ENCODE measurements at regions of chr13 and their contacts with region 1.

Region 1: GRCh38 chr13:50319635-50320255 is 304.5 kb downstream of the KCNRG start:
- DNase-seq: no peak
- H3K4me3 Mint-ChIP-seq: no peak overlapping the region
- H3K27ac Mint-ChIP-seq: no peak overlapping the region
- H3K4me1 Mint-ChIP-seq: peaks cover 22% of the 10 kb centered on the region
- H3K27me3 Mint-ChIP-seq: peaks cover 9% of the 10 kb centered on the region

Region 2: DNA sequence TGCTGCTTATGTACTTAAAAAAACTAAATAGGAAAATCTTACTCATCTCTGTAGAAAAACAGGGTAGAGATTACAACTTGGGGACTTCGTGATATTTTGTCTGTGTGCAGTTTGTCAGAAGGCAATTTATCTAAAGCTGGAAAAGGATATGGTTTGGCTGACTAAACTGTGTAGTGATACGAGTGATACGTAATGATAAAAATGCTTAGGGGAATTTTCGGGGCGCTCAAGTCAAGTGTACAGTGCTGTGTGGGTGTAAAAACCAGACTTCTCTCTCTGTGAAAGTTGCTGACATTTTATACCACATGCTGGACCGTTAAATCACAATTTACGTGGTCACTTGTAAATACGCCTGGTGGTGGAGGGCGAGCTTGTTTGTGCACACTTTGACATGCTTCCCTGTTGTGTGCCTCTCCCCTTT is 82.8 kb before region 1 on chr13:
- intact Hi-C with region 1: loop called (anchors 5 kb)
- DNase-seq: peak; percentile 45
- H3K4me3 Mint-ChIP-seq: peak overlapping the region; percentile 27
- H3K27ac Mint-ChIP-seq: peak overlapping the region; percentile 78
- H3K4me1 Mint-ChIP-seq: peaks cover 59% of the 10 kb centered on the region
- H3K27me3 Mint-ChIP-seq: peaks cover 22% of the 10 kb centered on the region